GM10248 (cell line): ENCODE measurements at regions of chr10 and their contacts with region 1.

Region 1: DNA sequence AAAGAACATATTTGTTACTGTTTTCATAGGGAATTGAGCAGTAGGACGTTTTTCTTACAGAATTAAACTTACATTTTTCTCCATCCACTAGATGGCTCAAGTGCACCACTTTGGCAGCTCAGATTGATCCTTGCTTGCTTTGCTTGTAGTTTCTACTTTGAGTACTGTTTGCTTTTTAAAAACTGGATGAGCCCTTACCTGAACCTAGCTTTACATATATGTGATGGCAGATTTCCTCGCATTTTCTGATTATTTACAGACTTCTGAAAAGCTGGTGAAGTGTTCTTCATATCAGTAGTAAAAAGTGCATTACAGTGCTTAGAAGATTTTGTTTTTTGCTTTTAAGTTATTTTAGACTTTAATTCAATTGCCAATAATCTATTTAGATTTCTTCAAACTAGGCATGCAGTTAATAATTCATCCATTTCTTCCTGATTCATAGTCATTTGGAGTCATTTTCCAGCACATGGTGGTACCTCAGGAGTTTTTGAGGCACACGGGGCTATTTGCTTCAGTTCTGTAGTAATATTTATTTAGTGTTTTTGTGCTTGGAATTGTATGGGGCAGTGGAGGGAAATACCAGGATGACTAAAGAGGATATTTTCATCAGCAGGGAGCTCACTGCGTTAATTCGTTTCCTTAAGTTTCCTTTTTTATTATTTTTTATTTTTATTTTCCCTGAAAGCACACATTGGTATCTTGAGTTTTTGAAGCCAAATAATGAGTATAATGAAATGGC is 57.3 kb downstream of the MAPK8 start:
- DNase-seq: peak; percentile 25
- CTCF ChIP-seq: peak; percentile 54

Region 2: DNA sequence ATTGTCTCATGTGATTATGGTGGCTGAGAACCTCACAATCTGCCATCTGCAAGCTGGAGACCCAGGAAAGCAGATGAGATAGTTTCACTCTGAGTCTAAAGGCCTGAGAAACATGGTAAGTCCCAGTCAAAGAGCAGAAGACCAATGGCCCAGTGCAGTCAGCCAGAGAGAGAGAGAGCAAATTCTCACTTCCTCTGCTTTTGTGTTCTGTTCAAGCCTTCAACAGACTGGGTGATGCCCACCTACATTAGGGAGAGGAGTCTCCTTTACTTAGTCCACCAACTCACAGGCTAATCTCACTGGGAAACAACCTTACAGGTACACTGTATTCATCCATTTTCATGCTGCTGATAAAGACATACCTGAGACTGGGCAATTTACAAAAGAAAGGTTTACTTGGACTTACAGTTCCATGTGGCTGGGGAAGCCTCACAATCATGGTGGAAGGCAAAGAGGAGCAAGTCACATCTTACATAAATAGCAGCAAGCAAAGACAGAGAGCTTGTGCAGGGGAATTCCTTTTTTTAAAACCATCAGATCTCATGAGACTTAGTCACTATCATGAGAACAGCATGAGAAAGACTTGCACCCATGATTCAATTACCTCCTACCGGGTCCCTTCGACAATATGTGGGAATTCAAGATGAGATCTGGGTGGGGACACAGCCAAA is 84.6 kb before region 1 on chr10:
- CTCF ChIA-PET with region 1: no interaction called
- POLR2A ChIA-PET with region 1: no interaction called
- DNase-seq: peak; percentile 45
- CTCF ChIP-seq: no peak

Region 3: DNA sequence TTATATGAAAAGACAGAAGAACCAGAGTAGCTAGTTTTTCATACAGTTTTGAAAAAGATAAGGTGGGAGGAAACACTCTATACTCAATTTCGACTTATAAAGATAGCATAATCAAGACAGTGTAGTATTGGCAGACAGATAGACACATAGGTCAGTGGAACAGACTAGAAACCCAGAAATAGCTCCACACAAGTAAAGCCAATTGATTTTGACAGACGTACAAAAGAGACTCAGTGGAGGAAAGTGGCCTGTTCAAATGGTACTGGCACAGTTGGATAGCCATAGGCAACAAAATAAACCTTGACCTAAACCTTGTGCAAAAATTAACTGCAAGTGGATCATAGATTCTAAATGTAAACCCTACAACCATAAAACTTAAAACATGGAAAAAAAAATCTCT is 10.5 kb before region 1 on chr10:
- CTCF ChIA-PET with region 1: interaction called, 13 read pairs
- POLR2A ChIA-PET with region 1: no interaction called
- DNase-seq: no peak
- CTCF ChIP-seq: no peak

Region 4: DNA sequence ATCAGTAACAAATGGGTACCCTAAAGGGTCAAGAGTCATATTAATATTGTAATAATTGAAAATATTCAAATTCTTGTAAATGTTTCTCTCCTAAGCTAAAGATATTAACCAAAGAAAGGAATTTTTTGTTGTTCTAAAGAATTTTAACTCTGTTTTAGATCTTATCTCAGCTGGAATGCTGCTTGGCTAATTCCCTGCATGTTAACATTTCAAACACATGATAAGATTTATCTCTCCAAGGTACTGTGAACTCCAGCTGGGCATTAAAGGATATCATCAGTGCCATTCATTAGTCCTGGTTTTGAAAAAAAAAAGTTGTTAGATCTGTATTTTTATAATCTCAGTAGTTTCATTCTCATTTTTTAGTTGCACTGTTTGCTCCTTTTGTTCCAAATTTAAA is 19.6 kb after region 1 on chr10:
- CTCF ChIA-PET with region 1: interaction called, 15 read pairs
- POLR2A ChIA-PET with region 1: no interaction called
- DNase-seq: no peak
- CTCF ChIP-seq: no peak

Region 5: GRCh38 chr10:48406204-48406603 is 42.4 kb after region 1 on chr10:
- CTCF ChIA-PET with region 1: no interaction called
- POLR2A ChIA-PET with region 1: no interaction called
- DNase-seq: no peak
- CTCF ChIP-seq: no peak

Region 6: DNA sequence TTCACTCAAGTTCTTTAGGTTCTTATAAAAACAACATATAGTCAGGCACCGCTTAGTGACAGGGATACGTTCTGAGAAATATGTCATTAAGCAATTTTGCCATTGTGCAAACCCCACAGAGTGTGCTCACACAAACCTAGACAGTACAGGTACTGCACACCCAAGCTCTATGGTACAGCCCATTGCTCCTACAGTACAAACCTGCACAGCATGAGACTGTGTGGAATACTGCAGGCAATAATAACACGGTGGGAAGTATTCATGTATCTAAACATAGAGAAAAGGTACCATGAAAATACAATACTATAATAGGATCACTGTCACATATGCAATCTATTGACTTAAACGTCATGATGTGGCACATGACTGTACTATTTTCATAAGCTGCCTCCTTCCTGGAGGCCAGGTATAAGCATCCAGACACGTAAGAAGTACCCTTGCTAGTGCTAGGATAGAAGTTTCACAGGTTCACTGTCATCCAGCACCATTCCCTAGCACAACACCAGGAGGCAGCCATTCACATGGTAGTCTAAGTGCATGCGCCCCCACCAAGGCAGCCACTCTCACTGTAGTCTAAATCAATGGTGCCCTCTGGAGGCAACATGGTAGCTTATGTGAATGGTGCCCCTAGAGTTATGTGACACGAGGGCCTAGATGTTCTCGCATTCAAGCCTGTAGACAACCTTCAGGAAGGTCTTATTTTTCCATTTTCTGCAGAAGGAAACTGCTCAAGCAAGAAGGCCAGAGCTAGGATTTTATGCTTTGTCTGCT is 142.5 kb after region 1 on chr10:
- CTCF ChIA-PET with region 1: interaction called, 20 read pairs
- POLR2A ChIA-PET with region 1: no interaction called
- DNase-seq: no peak
- CTCF ChIP-seq: peak; percentile 29